Right ventricle myocardium superior (tissue), 1 donor: ENCODE measurements at regions of chr15 and their contacts with region 1.

Region 1: GRCh38 chr15:35519541-35520149 is 26.3 kb downstream of the DPH6 start:
- DNase-seq: no peak
- ATAC-seq: peak; percentile 86

Region 2: GRCh38 chr15:35912196-35912595 is 392.6 kb after region 1 on chr15:
- intact Hi-C with region 1: loop called (anchors 5 kb)
- DNase-seq: no peak
- ATAC-seq: peak; percentile 87

Region 3: GRCh38 chr15:36024031-36024688 is 504.5 kb after region 1 on chr15:
- intact Hi-C with region 1: loop called (anchors 10 kb)
- DNase-seq: no peak
- ATAC-seq: no peak